ENCODE measurements at regions of chr12 and their contacts with region 1.

Region 1: GRCh38 chr12:110826592-110827200 is 20.1 kb upstream of the CCDC63 start:
- DNase-seq: peak; percentile 87 to 95
- H3K4me3 ChIP-seq: no peak overlapping the region
- H3K27ac ChIP-seq: no peak overlapping the region
- H3K4me1 ChIP-seq: no peaks in the 10 kb centered on the region; a peak in 1 of 7 replicates
- H3K27me3 ChIP-seq: peaks cover 0 to 3% (median 0%) of the 10 kb centered on the region in 4 experiments; a peak in 1 of 7 replicates
- CTCF ChIP-seq: peak; percentile 87 to 98 (median 95)
- EP300 ChIP-seq: no peak
- POLR2A ChIP-seq: no peak
- RAD21 ChIP-seq: peak; percentile 94 to 97

Region 2: GRCh38 chr12:110704748-110705147 is 121.9 kb before region 1 on chr12:
- CTCF ChIA-PET with region 1: interaction called, 12 read pairs
- POLR2A ChIA-PET with region 1: interaction called, 5 read pairs
- DNase-seq: no peak
- H3K4me3 ChIP-seq: no peak overlapping the region
- H3K27ac ChIP-seq: no peak overlapping the region
- H3K4me1 ChIP-seq: no peaks in the 10 kb centered on the region
- H3K27me3 ChIP-seq: no peaks in the 10 kb centered on the region
- CTCF ChIP-seq: peak; percentile 52 to 74 (median 64)
- EP300 ChIP-seq: no peak
- POLR2A ChIP-seq: no peak
- RAD21 ChIP-seq: peak; percentile 49 to 61

Region 3: GRCh38 chr12:110776410-110776809 is 50.3 kb before region 1 on chr12:
- CTCF ChIA-PET with region 1: interaction called, 10 read pairs
- POLR2A ChIA-PET with region 1: no interaction called
- DNase-seq: no peak
- H3K4me3 ChIP-seq: no peak overlapping the region
- H3K27ac ChIP-seq: no peak overlapping the region
- H3K4me1 ChIP-seq: no peaks in the 10 kb centered on the region
- H3K27me3 ChIP-seq: no peaks in the 10 kb centered on the region
- CTCF ChIP-seq: no peak
- EP300 ChIP-seq: no peak
- POLR2A ChIP-seq: no peak
- RAD21 ChIP-seq: no peak

Region 4: DNA sequence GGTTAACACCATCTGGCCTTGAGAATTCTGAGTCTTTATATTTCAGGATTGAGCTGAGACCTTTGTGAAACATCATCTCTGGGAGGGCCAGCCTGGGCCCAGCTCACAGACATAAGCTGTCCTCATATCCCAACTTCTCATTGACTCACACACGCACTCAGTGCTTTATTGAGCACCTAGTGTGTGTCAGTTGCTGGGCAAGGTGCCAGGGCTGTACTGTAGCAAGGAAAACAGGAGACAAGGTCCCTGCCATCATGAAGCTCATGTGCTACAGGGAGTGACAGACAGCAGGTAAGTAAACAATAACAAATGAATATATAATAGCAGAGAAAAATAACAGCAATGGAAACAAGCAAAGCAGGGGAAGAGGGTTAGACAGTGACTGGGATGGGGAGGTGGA is 10.4 kb before region 1 on chr12:
- CTCF ChIA-PET with region 1: interaction called, 30 read pairs
- POLR2A ChIA-PET with region 1: interaction called, 3 read pairs
- DNase-seq: no peak
- H3K4me3 ChIP-seq: no peak overlapping the region
- H3K27ac ChIP-seq: no peak overlapping the region
- H3K4me1 ChIP-seq: peaks cover 7 to 24% (median 13%) of the 10 kb centered on the region in 4 experiments
- H3K27me3 ChIP-seq: peaks cover 3 to 31% (median 25%) of the 10 kb centered on the region in 4 experiments; a peak in 6 of 7 replicates
- CTCF ChIP-seq: no peak
- EP300 ChIP-seq: no peak
- POLR2A ChIP-seq: no peak
- RAD21 ChIP-seq: no peak

Region 5: GRCh38 chr12:110846615-110847566 is 20.2 kb after region 1 on chr12 and contains the start of gene CCDC63:
- CTCF ChIA-PET with region 1: interaction called, 23 read pairs
- POLR2A ChIA-PET with region 1: interaction called, 5 read pairs
- DNase-seq: peak; percentile 25 to 83
- H3K4me3 ChIP-seq: peak within 1 kb of the TSS; percentile 66 to 85 (median 76)
- H3K27ac ChIP-seq: peak within 1 kb of the TSS; percentile 77
- H3K4me1 ChIP-seq: peaks cover 2 to 7% (median 5%) of the 10 kb centered on the region in 4 experiments; a peak in 6 of 7 replicates
- H3K27me3 ChIP-seq: peaks cover 0 to 3% (median under 1%) of the 10 kb centered on the region in 4 experiments; a peak in 1 of 7 replicates
- CTCF ChIP-seq: peak; percentile 41 to 49 (median 41); a peak in 3 of 4 replicates
- EP300 ChIP-seq: no peak
- POLR2A ChIP-seq: peak in 1 of 2 experiments; percentile 59; a peak in 2 of 3 replicates
- RAD21 ChIP-seq: peak in 1 of 2 experiments; percentile 32; a peak in 3 of 4 replicates
- total RNA-seq, gene CCDC63: 0.55 and 0.93 TPM in 2 replicates

Region 6: DNA sequence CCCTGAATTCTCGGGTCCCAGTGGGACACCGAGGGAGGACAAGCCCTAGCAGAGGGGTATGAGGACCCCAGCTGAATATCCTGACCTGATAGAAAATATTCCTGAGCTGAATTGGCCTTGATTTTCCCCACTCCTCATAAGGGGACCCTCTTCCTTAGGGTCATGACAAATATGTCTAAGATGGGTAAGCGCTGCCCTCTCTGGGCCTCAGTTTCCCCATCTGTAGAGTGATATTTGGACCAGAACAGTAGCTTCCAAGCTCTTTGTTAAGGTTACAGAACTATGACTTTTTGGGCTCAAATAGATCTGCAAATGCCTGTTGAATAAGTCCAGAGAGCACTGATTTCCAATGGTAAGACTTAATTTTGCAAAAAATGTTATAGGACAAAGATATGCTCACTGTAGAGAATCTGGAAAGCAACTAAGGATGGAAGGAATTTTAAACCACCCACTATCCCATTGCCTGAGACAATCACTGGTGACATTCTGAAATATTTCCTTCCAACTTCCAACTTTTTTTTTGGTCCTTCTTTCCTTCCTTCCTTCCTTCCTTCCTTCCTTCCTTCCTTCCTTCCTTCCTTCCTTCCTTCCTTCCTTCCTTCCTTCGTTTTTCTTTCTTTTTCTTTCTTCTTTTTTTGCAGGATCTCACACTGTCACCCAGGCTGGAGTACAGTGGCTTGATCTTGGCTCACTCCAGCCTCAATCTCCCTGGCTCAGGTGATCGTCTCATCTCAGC is 61.7 kb after region 1 on chr12:
- CTCF ChIA-PET with region 1: interaction called, 22 read pairs
- POLR2A ChIA-PET with region 1: interaction called, 3 read pairs
- DNase-seq: no peak
- H3K4me3 ChIP-seq: no peak overlapping the region
- H3K27ac ChIP-seq: no peak overlapping the region
- H3K4me1 ChIP-seq: no peaks in the 10 kb centered on the region
- H3K27me3 ChIP-seq: no peaks in the 10 kb centered on the region
- CTCF ChIP-seq: no peak
- EP300 ChIP-seq: no peak
- POLR2A ChIP-seq: no peak
- RAD21 ChIP-seq: no peak

Measured in H1 (cell line).